ENCODE measurements at regions of chr1 and their contacts with region 1.

Region 1: GRCh38 chr1:151070474-151071276 is at the start of gene GABPB2:
- DNase-seq: peak; percentile 94
- ATAC-seq: peak; percentile 89
- H3K4me3 ChIP-seq: peak within 1 kb of the TSS; percentile 88 to 99 (median 98)
- H3K4me3 Mint-ChIP-seq: peak within 1 kb of the TSS; percentile 97
- H3K27ac ChIP-seq: peak within 1 kb of the TSS; percentile 93 to 96
- H3K27ac Mint-ChIP-seq: peak within 1 kb of the TSS; percentile 100
- H3K4me1 ChIP-seq: peaks cover 13 to 18% of the 10 kb centered on the region in 2 donors
- H3K4me1 Mint-ChIP-seq: peaks cover 17% of the 10 kb centered on the region
- H3K27me3 ChIP-seq: no peaks in the 10 kb centered on the region
- H3K27me3 Mint-ChIP-seq: no peaks in the 10 kb centered on the region
- CTCF ChIP-seq: peak; percentile 93
- total RNA-seq, gene GABPB2: 22.4 and 22.9 TPM in 2 replicates

Region 2: DNA sequence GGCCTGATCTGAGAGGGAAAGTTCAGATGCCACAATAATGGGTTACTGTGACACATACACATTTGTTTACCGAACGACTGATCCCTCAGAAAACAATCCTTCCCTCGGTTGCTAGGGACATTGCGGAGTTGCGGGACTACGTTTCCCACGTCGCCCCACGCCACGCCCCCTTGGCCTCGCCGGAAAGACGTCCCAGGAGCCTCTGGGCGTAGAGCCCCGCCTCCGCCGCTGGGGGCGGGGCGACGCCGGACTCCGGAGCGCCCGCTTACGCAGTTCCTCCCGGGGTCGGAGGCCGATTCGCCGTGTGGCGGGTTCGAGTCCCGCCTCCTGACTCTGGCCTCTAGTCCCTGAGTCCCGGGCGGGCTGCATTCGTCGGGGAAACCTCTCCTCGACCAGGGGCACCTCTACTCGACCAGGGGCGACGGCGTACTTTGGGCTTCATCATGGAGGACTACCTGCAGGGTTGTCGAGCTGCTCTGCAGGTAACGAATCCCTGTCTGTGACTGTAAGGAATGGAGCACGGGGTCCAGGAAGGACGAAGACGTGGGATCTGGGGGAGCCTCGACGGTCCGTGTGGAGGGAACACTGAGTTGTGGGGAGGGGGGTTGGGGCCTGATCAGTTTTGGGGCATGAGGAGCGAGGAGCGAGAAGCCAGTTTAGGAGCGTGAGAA is 62.4 kb before region 1 on chr1 and contains the start of gene PRUNE1:
- CTCF ChIA-PET with region 1: interaction called, 8 read pairs
- POLR2A ChIA-PET with region 1: interaction called, 5 read pairs
- intact Hi-C with region 1: loop called (anchors 1 kb)
- DNase-seq: peak; percentile 98
- ATAC-seq: peak; percentile 97
- H3K4me3 ChIP-seq: peak within 1 kb of the TSS; percentile 74 to 98 (median 85)
- H3K4me3 Mint-ChIP-seq: peak within 1 kb of the TSS; percentile 90
- H3K27ac ChIP-seq: peak within 1 kb of the TSS; percentile 82 to 95
- H3K27ac Mint-ChIP-seq: peak within 1 kb of the TSS; percentile 94
- H3K4me1 ChIP-seq: peaks cover 39 to 55% of the 10 kb centered on the region in 2 donors
- H3K4me1 Mint-ChIP-seq: peaks cover 66% of the 10 kb centered on the region
- H3K27me3 ChIP-seq: no peaks in the 10 kb centered on the region
- H3K27me3 Mint-ChIP-seq: no peaks in the 10 kb centered on the region
- CTCF ChIP-seq: no peak
- total RNA-seq, gene PRUNE1: 20.8 and 21.3 TPM in 2 replicates

Region 3: GRCh38 chr1:151047925-151048645 is 22.6 kb before region 1 on chr1:
- CTCF ChIA-PET with region 1: interaction called, 18 read pairs
- POLR2A ChIA-PET with region 1: interaction called, 13 read pairs
- intact Hi-C with region 1: loop called (anchors 1 kb)
- DNase-seq: peak; percentile 79
- ATAC-seq: peak; percentile 69
- H3K4me3 ChIP-seq: peak overlapping the region; percentile 70 to 97 (median 93)
- H3K4me3 Mint-ChIP-seq: peak overlapping the region; percentile 96
- H3K27ac ChIP-seq: peak overlapping the region; percentile 71 to 75
- H3K27ac Mint-ChIP-seq: peak overlapping the region; percentile 94
- H3K4me1 ChIP-seq: peaks cover 20 to 30% of the 10 kb centered on the region in 2 donors
- H3K4me1 Mint-ChIP-seq: peaks cover 42% of the 10 kb centered on the region
- H3K27me3 ChIP-seq: no peaks in the 10 kb centered on the region
- H3K27me3 Mint-ChIP-seq: no peaks in the 10 kb centered on the region
- CTCF ChIP-seq: peak; percentile 70

Region 4: DNA sequence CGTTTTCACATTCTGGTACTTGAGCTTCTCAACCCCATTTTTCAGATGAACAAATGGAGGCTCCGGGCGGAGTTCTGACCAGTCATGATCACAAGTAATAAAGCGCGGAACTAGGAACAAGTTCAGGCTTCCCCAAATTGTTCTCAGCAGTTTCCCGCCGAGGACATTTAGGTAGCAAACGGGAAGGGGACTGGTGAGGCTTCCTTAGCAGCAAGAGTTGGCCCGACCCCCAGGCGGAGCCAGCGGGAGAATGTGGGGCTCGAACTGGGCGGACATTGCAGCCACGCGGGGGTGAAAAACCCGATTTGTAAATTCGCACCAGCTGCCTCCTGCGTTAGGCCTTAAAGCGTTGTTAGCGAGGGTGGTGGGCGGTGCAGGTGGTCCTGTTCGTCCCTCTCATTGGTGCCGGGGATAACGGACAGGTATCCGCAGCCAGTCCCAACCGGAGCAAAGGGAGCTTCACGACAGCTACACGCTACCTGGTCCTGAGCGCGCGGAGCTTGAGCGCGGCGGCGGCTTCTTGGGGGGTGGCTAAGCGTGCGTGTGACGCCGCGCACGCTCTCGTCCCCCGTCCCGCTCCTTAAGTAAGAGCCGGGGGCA is 60.4 kb after region 1 on chr1:
- CTCF ChIA-PET with region 1: interaction called, 3 read pairs
- POLR2A ChIA-PET with region 1: interaction called, 4 read pairs
- intact Hi-C with region 1: loop called (anchors 1 kb)
- DNase-seq: peak; percentile 89
- ATAC-seq: peak; percentile 100
- H3K4me3 ChIP-seq: peak overlapping the region in 4 of 5 experiments; percentile 42 to 58 (median 51)
- H3K4me3 Mint-ChIP-seq: peak overlapping the region; percentile 89
- H3K27ac ChIP-seq: peak overlapping the region; percentile 46 to 53
- H3K27ac Mint-ChIP-seq: peak overlapping the region; percentile 92
- H3K4me1 ChIP-seq: peaks cover 6 to 15% of the 10 kb centered on the region in 2 donors
- H3K4me1 Mint-ChIP-seq: peaks cover 14% of the 10 kb centered on the region
- H3K27me3 ChIP-seq: peaks cover 0 to 4% (median 0%) of the 10 kb centered on the region in 4 experiments
- H3K27me3 Mint-ChIP-seq: no peaks in the 10 kb centered on the region
- CTCF ChIP-seq: no peak

Region 5: GRCh38 chr1:151156515-151156819 is 85.8 kb after region 1 on chr1 and contains the start of gene TNFAIP8L2:
- CTCF ChIA-PET with region 1: interaction called, 7 read pairs
- POLR2A ChIA-PET with region 1: no interaction called
- intact Hi-C with region 1: loop called (anchors 1 kb)
- DNase-seq: peak; percentile 77
- ATAC-seq: peak; percentile 85
- H3K4me3 ChIP-seq: peak within 1 kb of the TSS; percentile 72 to 98 (median 72)
- H3K4me3 Mint-ChIP-seq: peak within 1 kb of the TSS; percentile 99
- H3K27ac ChIP-seq: peak within 1 kb of the TSS; percentile 29 to 79
- H3K27ac Mint-ChIP-seq: peak within 1 kb of the TSS; percentile 97
- H3K4me1 ChIP-seq: peaks cover 30 to 37% of the 10 kb centered on the region in 2 donors
- H3K4me1 Mint-ChIP-seq: peaks cover 41% of the 10 kb centered on the region
- H3K27me3 ChIP-seq: no peaks in the 10 kb centered on the region
- H3K27me3 Mint-ChIP-seq: no peaks in the 10 kb centered on the region
- CTCF ChIP-seq: no peak
- total RNA-seq, gene TNFAIP8L2: 14.9 and 17.6 TPM in 2 replicates